Activated naive CD4-positive, alpha-beta T cell treated with anti-CD3 and anti-CD28 coated beads for 36 hours (primary cell): ENCODE measurements at regions of chr9 and their contacts with region 1.

Region 1: DNA sequence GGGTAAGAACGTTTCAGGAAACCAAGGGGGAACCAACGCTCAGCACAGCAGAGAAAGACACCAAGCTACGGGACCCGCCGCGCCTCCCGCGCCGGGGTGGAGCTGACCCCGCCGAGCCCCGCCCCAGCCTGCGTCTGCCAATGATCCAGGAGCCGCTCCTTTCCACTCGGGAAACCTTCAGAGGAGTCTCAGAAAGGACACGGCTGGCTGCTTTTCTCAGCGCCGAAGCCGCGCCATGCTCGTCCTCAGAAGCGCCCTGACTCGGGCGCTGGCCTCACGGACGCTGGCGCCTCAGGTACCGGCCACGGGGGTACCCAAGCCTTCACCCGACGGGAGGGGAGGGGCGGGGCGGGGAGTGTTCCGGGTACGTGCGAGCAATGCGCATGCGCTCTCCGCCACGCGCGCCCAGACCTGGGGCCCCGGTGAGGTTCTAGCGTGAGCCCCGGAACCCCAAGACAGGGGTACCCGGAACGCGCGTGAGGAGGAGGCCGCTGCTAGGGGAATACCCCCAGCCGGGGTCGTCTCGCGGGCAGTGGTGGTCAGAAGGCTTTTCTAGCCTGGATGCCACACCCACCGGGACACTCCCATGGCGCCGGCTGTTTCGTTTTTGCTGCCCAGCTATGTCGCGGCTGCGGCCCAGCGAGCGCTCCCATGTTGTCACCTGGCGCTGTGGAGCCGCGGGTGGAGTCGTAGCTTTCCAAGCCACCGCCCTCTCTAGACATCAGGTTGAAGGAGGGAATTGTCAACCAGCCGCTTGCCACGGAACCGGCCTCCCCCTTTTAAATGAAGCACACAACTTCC is at the start of gene NIPSNAP3A:
- DNase-seq: peak; percentile 89
- H3K4me3 Mint-ChIP-seq: peak within 1 kb of the TSS; percentile 99
- H3K27ac Mint-ChIP-seq: peak within 1 kb of the TSS; percentile 97
- H3K4me1 Mint-ChIP-seq: peaks cover 24% of the 10 kb centered on the region
- H3K27me3 Mint-ChIP-seq: no peaks in the 10 kb centered on the region
- total RNA-seq, gene NIPSNAP3A: 17.8 TPM

Region 2: DNA sequence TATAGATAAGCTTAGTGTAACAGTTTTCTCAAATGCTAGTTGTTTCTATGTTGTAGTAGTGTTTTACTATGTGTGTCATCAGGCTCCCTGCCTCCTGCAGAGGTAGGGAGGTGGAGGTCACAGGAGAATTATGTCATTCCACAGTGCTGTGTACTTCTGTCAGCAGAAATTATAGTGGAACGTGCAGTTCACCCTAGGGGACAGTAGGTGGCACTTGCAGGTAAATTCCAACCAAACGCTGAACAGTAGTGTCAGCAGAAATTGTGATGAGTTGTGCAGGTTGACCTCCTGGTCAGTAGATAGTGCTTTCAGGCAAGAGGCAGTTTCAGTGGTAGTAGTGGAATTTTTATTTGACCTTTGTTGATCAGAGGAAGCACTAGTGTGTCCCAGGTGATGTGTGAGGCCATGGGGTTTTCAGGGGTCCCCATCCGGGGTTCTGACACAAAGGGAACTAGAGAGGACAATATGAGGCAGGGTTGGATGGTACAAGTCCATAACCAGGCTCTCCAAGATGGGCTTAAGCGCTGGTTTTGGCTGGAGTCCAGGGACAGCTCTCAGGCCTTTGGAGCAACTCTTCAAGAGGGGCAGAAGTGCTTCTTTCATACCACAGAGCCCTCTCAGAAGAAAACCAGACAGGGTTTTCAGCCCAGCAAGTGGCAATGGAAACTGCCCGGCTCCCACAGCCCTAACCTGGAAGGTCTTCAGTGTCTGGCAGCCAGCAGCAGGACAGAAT is 1349.7 kb before region 1 on chr9:
- CTCF ChIA-PET with region 1: interaction called, 3 read pairs
- intact Hi-C with region 1: loop called (anchors 1 kb)
- DNase-seq: peak; percentile 46
- H3K4me3 Mint-ChIP-seq: no peak overlapping the region
- H3K27ac Mint-ChIP-seq: no peak overlapping the region
- H3K4me1 Mint-ChIP-seq: no peaks in the 10 kb centered on the region
- H3K27me3 Mint-ChIP-seq: peaks cover 6% of the 10 kb centered on the region

Region 3: DNA sequence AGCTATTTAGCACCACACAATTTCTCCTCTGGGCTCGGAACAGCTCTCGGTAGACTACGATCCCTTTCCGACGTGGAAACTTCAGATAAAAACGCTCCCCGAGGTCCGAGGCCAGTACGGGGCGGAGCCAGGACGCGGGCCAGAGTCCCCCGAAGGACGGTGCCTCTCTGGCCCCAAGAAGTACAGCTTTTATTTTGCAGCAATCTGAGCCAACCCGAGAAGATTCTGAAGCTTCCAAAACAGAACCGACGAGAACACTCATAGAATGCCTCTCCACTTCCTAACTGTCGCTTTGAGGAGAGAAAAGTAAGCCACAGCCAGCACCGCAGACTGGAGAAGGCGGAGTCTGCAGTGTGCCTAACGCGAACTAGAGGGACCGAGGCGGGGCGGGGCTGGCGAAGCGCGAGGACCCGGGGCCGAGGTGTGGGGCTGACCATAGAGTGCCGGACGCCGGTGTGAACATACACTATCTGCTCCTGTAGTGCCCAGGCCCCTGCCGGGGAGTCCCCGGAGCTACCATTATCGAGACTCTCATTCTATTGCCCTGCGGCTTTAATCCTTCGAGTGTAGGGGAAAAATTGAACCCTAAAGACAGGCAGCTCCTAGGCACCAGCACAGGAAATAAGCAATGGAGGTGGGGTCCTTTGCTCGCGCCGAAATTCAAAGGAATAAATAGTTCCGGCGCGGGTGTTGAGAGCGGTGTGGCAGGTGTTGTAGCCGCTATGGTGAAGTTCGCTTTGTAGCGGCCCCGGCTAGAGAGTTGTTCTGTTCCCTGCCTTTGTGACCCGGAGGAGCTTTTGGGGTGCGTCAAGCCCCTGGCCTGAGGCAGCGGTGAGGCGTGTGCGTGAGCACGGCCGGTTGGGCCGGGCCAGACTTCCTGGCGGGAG is 653.9 kb before region 1 on chr9 and contains the start of gene SMC2:
- CTCF ChIA-PET with region 1: no interaction called
- intact Hi-C with region 1: loop called (anchors 1 kb)
- DNase-seq: peak; percentile 93
- H3K4me3 Mint-ChIP-seq: peak within 1 kb of the TSS; percentile 99
- H3K27ac Mint-ChIP-seq: peak within 1 kb of the TSS; percentile 95
- H3K4me1 Mint-ChIP-seq: peaks cover 35% of the 10 kb centered on the region
- H3K27me3 Mint-ChIP-seq: no peaks in the 10 kb centered on the region
- total RNA-seq, gene SMC2: 62.0 to 63.8 TPM

Region 4: DNA sequence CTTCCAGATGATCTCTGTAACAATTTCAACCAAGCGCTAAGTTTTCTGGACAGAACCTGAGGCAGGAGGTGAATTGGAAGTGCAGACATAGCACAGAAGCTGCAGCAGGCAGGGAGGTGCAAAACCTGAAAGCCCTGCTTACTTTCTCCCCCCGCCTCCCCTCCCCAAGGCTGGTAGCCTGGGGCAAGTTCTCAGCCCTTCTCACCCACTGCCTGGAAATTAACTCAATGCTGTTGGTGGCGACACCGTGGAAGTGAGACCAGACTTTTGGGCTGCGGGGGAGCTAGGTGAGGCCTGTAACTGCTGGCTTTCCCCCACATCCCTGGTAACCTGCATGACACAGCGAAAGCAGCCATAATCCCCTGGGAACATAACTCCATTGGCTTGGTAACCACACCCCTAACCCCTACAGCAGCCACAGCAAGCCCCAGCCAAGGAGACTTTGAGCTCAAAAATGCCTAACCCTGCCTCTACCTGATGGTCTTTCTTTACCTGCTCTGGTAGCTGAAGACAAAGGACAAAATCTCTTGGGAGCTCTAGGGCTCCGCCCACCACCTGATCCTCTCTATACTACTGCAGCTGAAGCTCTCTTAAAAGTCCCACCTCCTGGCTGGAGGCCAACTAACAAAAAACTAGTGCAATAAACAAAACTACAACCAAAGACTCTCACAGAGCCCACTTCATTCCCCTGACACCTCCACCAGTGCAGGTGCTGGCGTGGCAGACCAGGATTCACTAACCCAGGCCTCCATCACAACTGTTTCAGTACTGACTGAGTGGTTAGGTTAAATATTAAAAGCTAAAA is 190.7 kb before region 1 on chr9:
- CTCF ChIA-PET with region 1: no interaction called
- intact Hi-C with region 1: no loop called
- DNase-seq: no peak
- H3K4me3 Mint-ChIP-seq: no peak overlapping the region
- H3K27ac Mint-ChIP-seq: no peak overlapping the region
- H3K4me1 Mint-ChIP-seq: no peaks in the 10 kb centered on the region
- H3K27me3 Mint-ChIP-seq: no peaks in the 10 kb centered on the region

Region 5: GRCh38 chr9:104608336-104608735 is 139.4 kb before region 1 on chr9:
- CTCF ChIA-PET with region 1: no interaction called
- intact Hi-C with region 1: loop called (anchors 1 kb)
- DNase-seq: no peak
- H3K4me3 Mint-ChIP-seq: no peak overlapping the region
- H3K27ac Mint-ChIP-seq: no peak overlapping the region
- H3K4me1 Mint-ChIP-seq: no peaks in the 10 kb centered on the region
- H3K27me3 Mint-ChIP-seq: peaks cover 4% of the 10 kb centered on the region

Region 6: DNA sequence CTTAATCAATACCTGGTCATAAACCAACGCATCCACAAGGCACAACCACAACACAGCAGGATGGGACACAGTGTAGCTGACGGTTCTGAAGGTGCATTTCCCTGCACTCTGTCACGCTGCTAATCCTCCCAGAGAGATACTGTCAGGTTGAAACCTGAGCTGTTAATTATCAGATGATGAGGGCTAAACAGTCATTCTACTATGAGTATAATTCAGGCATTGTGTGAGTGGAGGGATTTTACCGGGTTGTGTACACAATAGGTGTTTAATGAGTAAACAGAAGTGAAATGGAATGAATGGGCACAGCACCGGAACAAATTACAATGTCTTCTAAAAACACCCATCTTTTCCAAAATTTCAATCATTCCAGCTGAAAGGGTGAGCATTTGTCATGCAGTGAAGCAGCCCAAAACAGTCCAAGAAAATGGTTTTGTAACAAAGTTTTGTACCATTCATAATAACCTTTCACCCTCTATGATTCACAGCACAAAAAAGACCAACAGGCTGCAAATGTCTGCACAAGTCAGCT is 108.7 kb after region 1 on chr9:
- CTCF ChIA-PET with region 1: no interaction called
- intact Hi-C with region 1: no loop called
- DNase-seq: no peak
- H3K4me3 Mint-ChIP-seq: no peak overlapping the region
- H3K27ac Mint-ChIP-seq: no peak overlapping the region
- H3K4me1 Mint-ChIP-seq: peaks cover 4% of the 10 kb centered on the region
- H3K27me3 Mint-ChIP-seq: no peaks in the 10 kb centered on the region

Region 7: GRCh38 chr9:104895572-104895971 is 147.8 kb after region 1 on chr9:
- CTCF ChIA-PET with region 1: no interaction called
- intact Hi-C with region 1: no loop called
- DNase-seq: no peak
- H3K4me3 Mint-ChIP-seq: no peak overlapping the region
- H3K27ac Mint-ChIP-seq: no peak overlapping the region
- H3K4me1 Mint-ChIP-seq: peaks cover 12% of the 10 kb centered on the region
- H3K27me3 Mint-ChIP-seq: no peaks in the 10 kb centered on the region

Region 8: GRCh38 chr9:104927912-104928740 is 180.4 kb after region 1 on chr9 and contains the start of gene ABCA1:
- CTCF ChIA-PET with region 1: no interaction called
- intact Hi-C with region 1: loop called (anchors 1 kb)
- DNase-seq: peak; percentile 94
- H3K4me3 Mint-ChIP-seq: peak within 1 kb of the TSS; percentile 86
- H3K27ac Mint-ChIP-seq: peak within 1 kb of the TSS; percentile 80
- H3K4me1 Mint-ChIP-seq: peaks cover 21% of the 10 kb centered on the region
- H3K27me3 Mint-ChIP-seq: peaks cover 2% of the 10 kb centered on the region
- total RNA-seq, gene ABCA1: 31.3 to 31.5 TPM

Region 9: DNA sequence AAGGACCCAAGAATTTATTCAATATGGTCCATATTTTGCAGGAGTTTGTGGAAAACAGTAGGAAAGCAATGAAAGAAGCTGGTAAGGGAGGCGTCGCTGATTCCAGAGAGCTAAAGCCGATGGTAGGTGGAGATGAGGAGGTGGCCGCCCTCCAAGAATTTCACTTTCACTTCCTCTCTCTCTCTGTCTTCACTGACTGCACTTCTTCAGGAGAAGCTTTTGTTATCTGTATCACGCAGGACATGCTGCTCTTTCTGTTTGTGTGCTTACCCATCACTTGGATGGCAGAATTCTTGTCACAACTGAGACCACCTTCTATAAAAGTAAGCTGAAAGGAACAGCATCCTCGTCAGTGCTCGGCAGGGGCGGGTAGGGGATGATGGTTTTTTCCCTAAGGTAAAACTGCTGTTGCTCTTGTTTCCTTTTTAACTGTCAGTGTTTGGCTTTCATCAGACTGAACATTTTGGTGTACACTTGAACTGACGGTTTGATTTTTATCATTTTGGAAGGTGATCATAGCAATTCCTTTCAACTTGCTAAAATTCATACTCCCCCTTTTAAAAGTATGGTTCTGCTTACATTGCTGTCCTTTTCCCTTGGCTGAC is 637.7 kb after region 1 on chr9:
- CTCF ChIA-PET with region 1: no interaction called
- intact Hi-C with region 1: loop called (anchors 10 kb)
- DNase-seq: peak; percentile 50
- H3K4me3 Mint-ChIP-seq: peak overlapping the region; percentile 78
- H3K27ac Mint-ChIP-seq: no peak overlapping the region
- H3K4me1 Mint-ChIP-seq: peaks cover 12% of the 10 kb centered on the region
- H3K27me3 Mint-ChIP-seq: no peaks in the 10 kb centered on the region

Region 10: GRCh38 chr9:105694190-105694847 is 946.6 kb after region 1 on chr9 and contains the start of gene TMEM38B:
- CTCF ChIA-PET with region 1: no interaction called
- intact Hi-C with region 1: loop called (anchors 1 kb)
- DNase-seq: peak; percentile 76
- H3K4me3 Mint-ChIP-seq: peak within 1 kb of the TSS; percentile 90
- H3K27ac Mint-ChIP-seq: peak within 1 kb of the TSS; percentile 75
- H3K4me1 Mint-ChIP-seq: peaks cover 33% of the 10 kb centered on the region
- H3K27me3 Mint-ChIP-seq: peaks cover 10% of the 10 kb centered on the region
- total RNA-seq, gene TMEM38B: 17.6 TPM